ENCODE measurements at regions of chr1 and their contacts with region 1.

Region 1: DNA sequence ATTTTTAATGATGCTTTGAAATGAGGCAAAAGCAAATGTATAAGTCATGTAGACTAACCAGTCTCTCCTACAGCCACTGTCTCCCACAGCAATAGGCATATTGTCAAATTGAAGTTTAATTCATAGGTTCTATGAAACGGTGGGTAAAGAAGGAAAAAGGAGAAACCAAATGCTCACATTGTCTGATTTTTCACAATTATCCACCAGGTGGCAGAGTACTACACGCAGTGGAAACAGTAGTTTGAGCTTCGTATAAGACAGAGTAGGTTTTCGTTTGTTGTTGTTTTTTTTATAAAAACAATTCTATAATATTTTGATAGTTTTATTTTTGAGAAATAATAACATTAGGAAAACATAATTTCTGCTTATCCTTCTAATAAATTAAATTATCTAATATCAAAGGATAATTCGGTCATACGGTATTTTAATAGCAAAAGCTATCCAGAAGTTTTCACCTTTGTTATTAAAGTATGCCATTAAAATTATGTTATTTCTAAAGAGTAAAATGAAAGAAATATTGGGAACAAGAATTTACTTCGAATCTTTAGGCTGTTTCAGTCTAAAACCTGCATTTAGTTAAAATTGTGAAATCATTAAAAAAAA is 39.1 kb downstream of the TYW3 start:
- DNase-seq: no peak
- H3K4me3 ChIP-seq: no peak overlapping the region
- H3K27ac ChIP-seq: no peak overlapping the region
- H3K4me1 ChIP-seq: no peaks in the 10 kb centered on the region
- H3K27me3 ChIP-seq: no peaks in the 10 kb centered on the region
- CTCF ChIP-seq: peak in 2 of 3 experiments; percentile 53 to 65

Region 2: GRCh38 chr1:74791491-74791890 is 19.5 kb after region 1 on chr1:
- intact Hi-C with region 1: no loop called
- DNase-seq: no peak
- H3K4me3 ChIP-seq: no peak overlapping the region
- H3K27ac ChIP-seq: no peak overlapping the region
- H3K4me1 ChIP-seq: no peaks in the 10 kb centered on the region
- H3K27me3 ChIP-seq: no peaks in the 10 kb centered on the region
- CTCF ChIP-seq: no peak

Region 3: DNA sequence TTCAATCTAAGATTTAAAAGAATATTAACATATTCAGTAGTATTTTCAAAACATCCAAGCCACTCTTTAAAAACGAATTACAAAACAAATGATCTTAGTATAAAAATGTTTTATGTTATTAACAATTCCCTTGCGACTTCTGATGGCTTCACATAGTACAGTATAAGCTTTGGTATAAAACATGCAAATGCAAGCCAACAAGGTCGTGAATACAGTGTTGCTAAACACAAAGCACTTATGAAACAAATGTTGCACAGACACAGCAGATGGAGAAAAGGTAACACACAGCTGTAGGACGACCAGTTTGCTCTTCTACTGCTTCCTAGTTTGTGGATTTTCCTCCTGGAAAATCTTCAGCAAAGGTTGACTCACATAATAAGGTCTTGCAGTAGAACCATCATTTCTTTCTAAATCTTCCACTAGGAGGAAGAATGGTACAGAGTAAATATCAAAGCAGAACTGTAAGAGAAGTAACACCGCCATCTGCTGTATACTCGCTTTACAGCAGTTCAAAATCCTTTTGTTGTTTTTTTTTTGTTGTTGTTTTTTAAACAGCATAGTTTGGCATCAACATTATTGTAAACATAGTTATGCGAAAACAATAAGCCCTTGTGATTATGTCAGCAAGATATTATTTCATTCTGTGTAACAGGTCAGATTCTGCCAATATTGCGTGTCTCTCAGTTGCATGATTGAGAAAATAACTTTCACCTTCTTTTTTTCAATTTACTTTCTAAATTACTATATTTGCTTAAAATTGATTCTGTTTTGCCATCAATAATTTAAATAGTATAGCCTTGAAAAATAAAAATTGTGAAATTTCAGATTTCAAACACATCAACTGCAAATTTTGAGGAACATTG is 431.6 kb after region 1 on chr1:
- intact Hi-C with region 1: loop called (anchors 5 kb)
- DNase-seq: no peak
- H3K4me3 ChIP-seq: no peak overlapping the region
- H3K27ac ChIP-seq: no peak overlapping the region
- H3K4me1 ChIP-seq: no peaks in the 10 kb centered on the region
- H3K27me3 ChIP-seq: no peaks in the 10 kb centered on the region
- CTCF ChIP-seq: peak in 1 of 3 experiments; percentile 44